ENCODE measurements at regions of chr10 and their contacts with region 1.

Region 1: GRCh38 chr10:132223156-132223590 is 36.4 kb downstream of the DPYSL4 start:
- DNase-seq: peak; percentile 8
- ATAC-seq: peak; percentile 99
- H3K4me3 ChIP-seq: no peak overlapping the region
- H3K27ac ChIP-seq: no peak overlapping the region
- H3K4me1 ChIP-seq: no peaks in the 10 kb centered on the region
- H3K27me3 ChIP-seq: no peaks in the 10 kb centered on the region
- CTCF ChIP-seq: peak; percentile 79 to 96 (median 91); a peak in 5 of 6 replicates
- EP300 ChIP-seq: no peak
- POLR2A ChIP-seq: no peak
- RAD21 ChIP-seq: peak; percentile 75

Region 2: DNA sequence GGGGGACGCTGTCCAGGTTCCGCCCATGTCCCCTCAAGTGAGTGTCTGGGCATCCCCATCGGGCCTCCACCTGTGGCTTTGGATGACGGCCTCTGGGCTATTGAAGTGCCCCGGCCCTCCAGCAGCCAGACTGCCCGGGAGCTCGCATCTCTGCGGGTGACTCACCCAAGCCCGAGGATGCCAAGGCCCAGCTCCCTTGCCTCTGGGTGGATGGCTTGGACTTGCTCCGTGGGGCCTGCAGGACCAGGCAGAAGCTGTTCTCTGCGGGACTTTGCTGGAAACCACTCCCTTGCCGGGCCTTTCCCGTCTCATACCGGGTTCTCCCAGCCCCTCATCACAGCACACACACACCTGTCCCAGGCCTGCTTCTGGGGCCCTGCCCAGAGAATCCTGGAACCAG is 14.0 kb before region 1 on chr10:
- CTCF ChIA-PET with region 1: no interaction called
- POLR2A ChIA-PET with region 1: no interaction called
- RAD21 ChIA-PET with region 1: no interaction called
- SMC1A ChIA-PET with region 1: no interaction called
- in situ Hi-C with region 1: no loop called
- intact Hi-C with region 1: no loop called
- DNase-seq: no peak
- ATAC-seq: no peak
- H3K4me3 ChIP-seq: no peak overlapping the region
- H3K27ac ChIP-seq: no peak overlapping the region
- H3K4me1 ChIP-seq: no peaks in the 10 kb centered on the region
- H3K27me3 ChIP-seq: no peaks in the 10 kb centered on the region
- CTCF ChIP-seq: no peak
- EP300 ChIP-seq: no peak
- POLR2A ChIP-seq: no peak
- RAD21 ChIP-seq: no peak

Region 3: DNA sequence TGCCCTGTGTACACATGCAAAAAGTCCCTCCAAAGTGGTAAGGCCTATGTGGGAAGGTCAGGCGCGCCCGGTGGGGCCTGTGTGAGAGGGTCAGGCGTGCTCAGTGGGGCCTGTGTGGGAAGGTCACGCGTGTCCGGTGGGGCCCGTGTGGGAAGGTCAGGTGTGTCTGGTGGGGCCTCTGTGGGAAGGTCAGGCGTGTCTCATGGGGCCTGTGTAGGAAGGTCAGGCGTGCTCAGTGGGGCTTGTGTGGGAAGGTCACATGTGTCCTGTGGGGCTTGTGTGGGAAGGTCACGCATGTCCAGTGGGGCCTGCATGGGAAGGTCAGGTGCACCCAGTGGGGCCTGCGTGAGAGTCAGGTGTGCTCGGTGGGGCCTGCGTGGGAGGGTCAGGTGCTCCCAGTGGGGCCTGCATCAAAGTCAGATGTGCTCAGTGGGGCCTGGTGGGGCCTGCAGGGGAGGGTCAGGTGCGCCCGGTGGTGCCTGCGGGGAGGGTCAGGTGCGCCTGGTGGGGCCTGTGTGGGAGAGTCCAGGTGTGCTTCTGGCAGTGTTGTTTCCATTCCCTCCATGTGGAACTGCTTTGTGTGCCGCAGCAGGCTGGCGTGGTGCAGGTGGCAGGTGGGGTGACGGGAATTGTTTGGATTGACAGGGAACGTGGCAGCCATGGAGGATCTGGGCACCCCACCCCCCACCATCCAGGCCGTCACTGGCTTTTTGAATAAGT is 124.2 kb after region 1 on chr10:
- CTCF ChIA-PET with region 1: no interaction called
- POLR2A ChIA-PET with region 1: no interaction called
- RAD21 ChIA-PET with region 1: no interaction called
- SMC1A ChIA-PET with region 1: no interaction called
- in situ Hi-C with region 1: loop called (anchors 5 kb)
- intact Hi-C with region 1: loop called (anchors 1 kb)
- DNase-seq: no peak
- ATAC-seq: no peak
- H3K4me3 ChIP-seq: no peak overlapping the region
- H3K27ac ChIP-seq: no peak overlapping the region
- H3K4me1 ChIP-seq: no peaks in the 10 kb centered on the region
- H3K27me3 ChIP-seq: no peaks in the 10 kb centered on the region
- CTCF ChIP-seq: no peak
- EP300 ChIP-seq: no peak
- POLR2A ChIP-seq: no peak
- RAD21 ChIP-seq: no peak

Region 4: DNA sequence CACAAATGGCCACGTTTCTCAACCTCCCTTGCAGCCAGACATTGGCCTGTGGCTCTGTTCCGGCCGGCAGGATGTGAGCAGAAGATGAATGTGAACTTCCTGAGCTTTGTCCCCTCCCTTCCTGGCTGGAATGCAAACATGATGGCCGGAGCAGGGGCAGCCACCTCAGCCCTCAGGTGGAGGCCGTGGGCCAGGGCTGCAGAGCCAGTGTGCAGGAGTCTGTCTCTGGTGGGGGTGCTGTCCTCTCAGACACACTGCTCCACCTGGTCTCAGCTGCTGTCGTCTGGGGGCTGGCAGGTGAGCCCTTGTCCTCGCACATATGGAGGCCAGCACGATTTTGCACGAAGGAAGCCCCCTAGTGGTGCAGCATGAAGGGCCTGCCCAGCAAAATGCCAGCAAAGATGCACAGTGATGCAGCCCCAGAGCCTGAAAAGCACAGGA is 148.5 kb after region 1 on chr10:
- CTCF ChIA-PET with region 1: no interaction called
- POLR2A ChIA-PET with region 1: no interaction called
- RAD21 ChIA-PET with region 1: no interaction called
- SMC1A ChIA-PET with region 1: no interaction called
- in situ Hi-C with region 1: no loop called
- intact Hi-C with region 1: loop called (anchors 1 kb)
- DNase-seq: no peak
- ATAC-seq: peak; percentile 45; the same call in 1 of the 3 replicates
- H3K4me3 ChIP-seq: no peak overlapping the region
- H3K27ac ChIP-seq: no peak overlapping the region
- H3K4me1 ChIP-seq: no peaks in the 10 kb centered on the region
- H3K27me3 ChIP-seq: no peaks in the 10 kb centered on the region; a peak in 1 of 4 replicates
- CTCF ChIP-seq: peak; percentile 24 to 62 (median 49); a peak in 5 of 6 replicates
- EP300 ChIP-seq: no peak
- POLR2A ChIP-seq: no peak
- RAD21 ChIP-seq: 0 out of 2 replicates have a peak, but pooled peaks have one; percentile 19

Region 5: DNA sequence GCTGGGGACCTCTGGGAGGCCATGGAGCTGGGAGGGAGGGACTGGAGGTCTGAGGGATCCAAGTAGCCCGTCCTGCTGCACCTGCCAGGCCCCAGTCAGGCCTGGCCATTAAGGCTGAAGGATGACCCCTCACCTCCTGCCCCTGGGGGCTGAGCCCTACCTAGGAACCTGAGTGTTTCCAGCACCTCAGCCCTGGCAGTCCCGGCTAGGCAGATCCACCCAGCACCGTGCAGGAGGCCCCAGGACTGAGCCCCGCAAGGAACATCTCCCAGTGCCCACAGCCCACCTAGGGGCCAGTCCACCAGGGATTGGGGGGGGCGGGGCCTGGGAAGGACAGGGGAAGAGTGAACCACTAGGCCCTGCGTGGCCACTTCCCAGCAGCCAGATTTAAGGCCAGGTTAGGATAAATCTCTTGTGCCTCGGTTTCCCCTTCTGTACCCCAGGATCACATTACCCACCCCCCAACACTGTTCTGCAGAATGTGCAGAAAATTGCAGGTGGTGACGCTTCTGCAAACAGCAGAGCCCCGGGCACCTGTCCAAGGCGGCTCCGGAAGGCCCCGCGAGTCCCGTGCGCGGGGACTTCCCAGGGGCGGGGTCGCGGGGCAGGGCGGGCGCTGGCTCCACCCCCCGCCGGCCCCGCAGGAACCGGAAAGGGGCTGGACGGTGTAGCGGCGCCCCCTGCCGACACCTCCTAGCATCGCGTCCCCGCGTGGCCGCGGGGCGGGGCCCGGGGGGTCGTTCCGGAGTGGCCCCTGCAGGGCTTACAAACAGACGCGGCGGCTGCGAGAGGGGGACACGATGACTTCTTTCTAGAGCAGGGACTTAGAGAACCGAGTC is 229.7 kb after region 1 on chr10:
- CTCF ChIA-PET with region 1: interaction called, 3 read pairs
- POLR2A ChIA-PET with region 1: no interaction called
- RAD21 ChIA-PET with region 1: no interaction called
- SMC1A ChIA-PET with region 1: no interaction called
- in situ Hi-C with region 1: loop called (anchors 5 kb)
- intact Hi-C with region 1: loop called (anchors 1 kb)
- DNase-seq: no peak
- ATAC-seq: peak; percentile 94
- H3K4me3 ChIP-seq: no peak overlapping the region
- H3K27ac ChIP-seq: peak overlapping the region; percentile 3; the same call in 1 of the 2 replicates
- H3K4me1 ChIP-seq: peaks cover 12% of the 10 kb centered on the region
- H3K27me3 ChIP-seq: no peaks in the 10 kb centered on the region
- CTCF ChIP-seq: peak; percentile 81 to 97 (median 88)
- EP300 ChIP-seq: no peak
- POLR2A ChIP-seq: no peak
- RAD21 ChIP-seq: peak; percentile 85